CD4-positive, alpha-beta T cell (primary cell): ENCODE measurements at regions of chr3 and their contacts with region 1.

Region 1: DNA sequence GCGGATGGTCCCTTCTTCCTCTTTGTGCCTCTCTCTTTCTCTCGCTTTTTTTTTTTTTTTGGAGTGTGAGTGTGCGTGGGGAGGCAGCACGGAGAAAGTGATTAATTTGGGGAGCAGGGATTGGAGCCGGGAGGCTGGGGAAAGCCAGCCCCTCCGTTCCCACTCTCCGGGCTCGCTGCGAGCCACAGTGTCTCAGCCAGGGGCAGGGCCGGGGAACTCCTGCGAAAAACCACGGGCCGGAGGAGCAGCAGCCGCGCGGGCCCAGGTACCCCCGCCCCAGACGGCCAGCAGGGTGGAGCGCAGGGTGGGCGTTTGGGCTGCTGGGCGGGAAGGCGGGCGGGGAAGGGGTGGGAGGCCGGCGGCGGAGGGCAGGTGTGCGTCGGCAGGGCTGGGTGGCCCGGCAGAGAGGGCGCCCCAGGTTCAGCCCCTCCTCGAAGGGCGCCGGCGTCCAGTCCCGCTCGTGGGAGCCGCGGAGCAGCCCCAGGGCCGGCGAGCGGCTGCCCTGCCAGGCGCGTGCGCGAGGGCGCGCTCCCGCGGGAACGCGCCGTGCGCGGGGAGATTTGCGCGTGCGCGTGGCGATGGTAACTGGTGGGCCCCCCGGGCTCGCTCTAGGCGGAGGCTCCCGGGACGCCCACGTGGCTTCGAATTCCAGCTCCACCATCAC is 1.4 kb downstream of the CHL1 start:
- DNase-seq: no peak
- ATAC-seq: no peak
- H3K4me3 ChIP-seq: no peak overlapping the region
- H3K4me3 Mint-ChIP-seq: no peak overlapping the region
- H3K27ac ChIP-seq: no peak overlapping the region
- H3K27ac Mint-ChIP-seq: no peak overlapping the region
- H3K4me1 ChIP-seq: no peaks in the 10 kb centered on the region
- H3K4me1 Mint-ChIP-seq: peaks cover 5% of the 10 kb centered on the region
- H3K27me3 ChIP-seq: peaks cover 23 to 39% of the 10 kb centered on the region in 2 experiments
- H3K27me3 Mint-ChIP-seq: peaks cover 53% of the 10 kb centered on the region
- CTCF ChIP-seq: no peak

Region 2: GRCh38 chr3:173886-174285 is 24.1 kb before region 1 on chr3:
- CTCF ChIA-PET with region 1: no interaction called
- POLR2A ChIA-PET with region 1: no interaction called
- intact Hi-C with region 1: no loop called
- DNase-seq: no peak
- ATAC-seq: no peak
- H3K4me3 ChIP-seq: no peak overlapping the region
- H3K4me3 Mint-ChIP-seq: no peak overlapping the region
- H3K27ac ChIP-seq: no peak overlapping the region
- H3K27ac Mint-ChIP-seq: no peak overlapping the region
- H3K4me1 ChIP-seq: no peaks in the 10 kb centered on the region
- H3K4me1 Mint-ChIP-seq: no peaks in the 10 kb centered on the region
- H3K27me3 ChIP-seq: no peaks in the 10 kb centered on the region
- H3K27me3 Mint-ChIP-seq: no peaks in the 10 kb centered on the region
- CTCF ChIP-seq: no peak

Region 3: GRCh38 chr3:184983-185382 is 13.0 kb before region 1 on chr3:
- CTCF ChIA-PET with region 1: no interaction called
- POLR2A ChIA-PET with region 1: no interaction called
- intact Hi-C with region 1: loop called in 1 of 2 experiments (anchors 1 kb)
- DNase-seq: no peak
- ATAC-seq: no peak
- H3K4me3 ChIP-seq: no peak overlapping the region
- H3K4me3 Mint-ChIP-seq: no peak overlapping the region
- H3K27ac ChIP-seq: no peak overlapping the region
- H3K27ac Mint-ChIP-seq: no peak overlapping the region
- H3K4me1 ChIP-seq: no peaks in the 10 kb centered on the region
- H3K4me1 Mint-ChIP-seq: no peaks in the 10 kb centered on the region
- H3K27me3 ChIP-seq: no peaks in the 10 kb centered on the region
- H3K27me3 Mint-ChIP-seq: no peaks in the 10 kb centered on the region
- CTCF ChIP-seq: no peak

Region 4: GRCh38 chr3:212432-212831 is 14.5 kb after region 1 on chr3:
- CTCF ChIA-PET with region 1: no interaction called
- POLR2A ChIA-PET with region 1: no interaction called
- intact Hi-C with region 1: no loop called
- DNase-seq: no peak
- ATAC-seq: no peak
- H3K4me3 ChIP-seq: no peak overlapping the region
- H3K4me3 Mint-ChIP-seq: no peak overlapping the region
- H3K27ac ChIP-seq: no peak overlapping the region
- H3K27ac Mint-ChIP-seq: no peak overlapping the region
- H3K4me1 ChIP-seq: no peaks in the 10 kb centered on the region
- H3K4me1 Mint-ChIP-seq: no peaks in the 10 kb centered on the region
- H3K27me3 ChIP-seq: no peaks in the 10 kb centered on the region
- H3K27me3 Mint-ChIP-seq: no peaks in the 10 kb centered on the region
- CTCF ChIP-seq: no peak